ENCODE measurements at regions of chr5 and their contacts with region 1.

Region 1: GRCh38 chr5:91162534-91163381 is 220.4 kb downstream of the ARRDC3 start:
- DNase-seq: peak; percentile 95
- ATAC-seq: peak; percentile 90
- H3K4me3 ChIP-seq: no peak overlapping the region
- H3K27ac ChIP-seq: peak overlapping the region; percentile 39
- H3K4me1 ChIP-seq: peaks cover 12% of the 10 kb centered on the region
- H3K27me3 ChIP-seq: no peaks in the 10 kb centered on the region
- CTCF ChIP-seq: no peak
- POLR2A ChIP-seq: no peak
- RAD21 ChIP-seq: peak; percentile 12; the same call in 1 of the 2 replicates

Region 2: DNA sequence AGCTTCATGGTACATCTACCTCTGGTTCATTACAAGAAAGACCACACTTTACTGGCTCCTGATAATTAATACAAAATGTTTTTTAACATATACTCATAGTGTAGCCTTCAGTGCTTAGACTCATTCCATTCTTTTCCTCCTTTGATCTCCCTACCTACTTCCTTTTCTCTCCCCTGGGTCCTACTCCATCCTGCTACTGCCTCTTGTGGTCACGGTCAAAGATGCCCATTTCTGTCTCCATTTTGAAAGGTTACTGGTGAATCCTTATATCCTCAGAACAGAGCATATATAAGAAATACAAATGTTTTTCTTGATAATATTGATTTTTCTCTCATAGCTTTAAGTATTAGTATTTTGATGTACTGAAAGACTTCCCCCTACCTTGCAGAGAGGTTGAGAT is 155.5 kb before region 1 on chr5:
- CTCF ChIA-PET with region 1: no interaction called
- POLR2A ChIA-PET with region 1: no interaction called
- dilution Hi-C with region 1: no loop called
- in situ Hi-C with region 1: no loop called
- intact Hi-C with region 1: no loop called
- DNase-seq: no peak
- ATAC-seq: no peak
- H3K4me3 ChIP-seq: no peak overlapping the region
- H3K27ac ChIP-seq: no peak overlapping the region
- H3K4me1 ChIP-seq: no peaks in the 10 kb centered on the region
- H3K27me3 ChIP-seq: no peaks in the 10 kb centered on the region
- CTCF ChIP-seq: no peak
- POLR2A ChIP-seq: no peak
- RAD21 ChIP-seq: no peak

Region 3: GRCh38 chr5:91225848-91226686 is 63.3 kb after region 1 on chr5:
- CTCF ChIA-PET with region 1: no interaction called
- POLR2A ChIA-PET with region 1: no interaction called
- dilution Hi-C with region 1: no loop called
- in situ Hi-C with region 1: loop called (anchors 10 kb)
- intact Hi-C with region 1: no loop called
- DNase-seq: no peak
- ATAC-seq: no peak
- H3K4me3 ChIP-seq: no peak overlapping the region
- H3K27ac ChIP-seq: no peak overlapping the region
- H3K4me1 ChIP-seq: no peaks in the 10 kb centered on the region
- H3K27me3 ChIP-seq: no peaks in the 10 kb centered on the region
- CTCF ChIP-seq: 0 out of 2 replicates have a peak, but pooled peaks have one; percentile 10
- POLR2A ChIP-seq: no peak
- RAD21 ChIP-seq: peak; percentile 34; the same call in 1 of the 2 replicates

Region 4: DNA sequence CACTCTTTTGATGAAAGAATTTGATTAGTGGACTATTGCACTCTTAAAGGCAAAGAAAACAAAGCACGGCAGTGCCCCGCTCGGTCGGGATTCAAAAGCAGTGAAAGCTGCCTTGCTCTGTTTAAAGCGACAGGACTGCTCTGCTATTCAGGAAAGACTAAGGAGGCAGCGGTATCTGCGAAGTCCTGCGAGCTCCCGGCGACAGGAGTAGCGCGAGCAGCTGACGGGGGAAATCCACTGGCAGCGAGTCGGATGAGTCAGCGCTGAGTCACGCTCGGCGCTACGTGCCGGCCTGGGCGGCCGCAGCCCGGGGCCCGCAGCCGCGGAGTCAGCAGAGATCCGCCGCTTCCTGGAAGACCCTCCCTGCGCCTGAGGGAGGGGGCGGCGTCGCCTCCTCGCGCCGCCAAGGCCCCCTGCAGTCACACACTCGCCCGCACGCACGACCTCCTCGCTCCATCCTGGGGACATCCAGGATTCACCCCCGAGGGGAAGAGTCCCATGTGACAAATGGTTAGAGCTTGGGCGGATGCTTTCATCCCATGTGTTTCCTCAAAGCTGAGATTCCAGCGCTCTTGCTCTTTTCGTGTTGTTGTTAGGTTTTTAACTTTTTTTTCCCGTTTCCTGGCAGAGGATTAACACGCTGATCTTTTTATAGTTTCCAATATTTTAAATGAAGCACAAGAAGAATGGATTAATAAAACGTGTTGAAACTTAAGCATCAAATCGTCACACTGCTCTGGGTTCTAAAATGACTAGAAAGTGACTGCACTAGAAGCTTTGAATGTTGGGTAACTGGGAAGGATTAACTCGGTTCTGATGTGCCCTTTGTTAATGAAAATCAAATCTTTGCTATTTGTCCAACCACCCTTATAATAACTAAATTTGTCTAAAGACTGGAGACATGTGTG is 117.9 kb after region 1 on chr5:
- CTCF ChIA-PET with region 1: no interaction called
- POLR2A ChIA-PET with region 1: no interaction called
- dilution Hi-C with region 1: no loop called
- in situ Hi-C with region 1: no loop called
- intact Hi-C with region 1: loop called (anchors 5 kb)
- DNase-seq: peak; percentile 99
- ATAC-seq: peak; percentile 88
- H3K4me3 ChIP-seq: peak overlapping the region; percentile 48
- H3K27ac ChIP-seq: peak overlapping the region; percentile 98
- H3K4me1 ChIP-seq: peaks cover 16% of the 10 kb centered on the region
- H3K27me3 ChIP-seq: no peaks in the 10 kb centered on the region
- CTCF ChIP-seq: no peak; the same call in 1 of the 2 replicates
- POLR2A ChIP-seq: peak; percentile 94
- RAD21 ChIP-seq: peak; percentile 37; the same call in 1 of the 2 replicates

Region 5: DNA sequence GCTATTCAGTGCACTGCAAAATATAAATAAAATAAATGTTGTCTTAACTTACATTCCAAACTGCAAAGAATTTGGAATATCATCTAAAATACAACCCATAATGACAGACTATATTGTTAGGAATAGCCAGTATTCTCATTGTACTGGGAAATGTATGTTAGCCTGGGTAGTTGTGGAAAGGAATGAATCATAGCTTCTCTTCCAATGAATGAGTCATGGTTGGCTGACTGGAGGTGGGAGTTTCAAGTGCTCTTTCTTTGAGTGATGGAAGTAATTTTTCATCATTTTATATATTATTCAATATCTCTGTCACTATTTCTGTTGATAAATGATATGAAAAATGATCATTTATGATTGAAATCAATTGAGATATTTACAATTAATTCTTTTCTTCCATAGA is 378.9 kb after region 1 on chr5:
- CTCF ChIA-PET with region 1: no interaction called
- POLR2A ChIA-PET with region 1: no interaction called
- dilution Hi-C with region 1: no loop called
- in situ Hi-C with region 1: no loop called
- intact Hi-C with region 1: no loop called
- DNase-seq: peak; percentile 16
- ATAC-seq: no peak
- H3K4me3 ChIP-seq: no peak overlapping the region
- H3K27ac ChIP-seq: no peak overlapping the region
- H3K4me1 ChIP-seq: no peaks in the 10 kb centered on the region
- H3K27me3 ChIP-seq: no peaks in the 10 kb centered on the region
- CTCF ChIP-seq: no peak
- POLR2A ChIP-seq: no peak
- RAD21 ChIP-seq: no peak